ENCODE measurements at regions of chr1 and their contacts with region 1.

Region 1: GRCh38 chr1:55107101-55107500 is 67.8 kb downstream of the PCSK9 start:
- DNase-seq: no peak
- CTCF ChIP-seq: no peak

Region 2: GRCh38 chr1:55124470-55124869 is 17.4 kb after region 1 on chr1:
- CTCF ChIA-PET with region 1: interaction called, 14 read pairs
- POLR2A ChIA-PET with region 1: no interaction called
- DNase-seq: no peak
- CTCF ChIP-seq: no peak